Naive thymus-derived CD8-positive, alpha-beta T cell (primary cell): ENCODE measurements at regions of chr5 and their contacts with region 1.

Region 1: DNA sequence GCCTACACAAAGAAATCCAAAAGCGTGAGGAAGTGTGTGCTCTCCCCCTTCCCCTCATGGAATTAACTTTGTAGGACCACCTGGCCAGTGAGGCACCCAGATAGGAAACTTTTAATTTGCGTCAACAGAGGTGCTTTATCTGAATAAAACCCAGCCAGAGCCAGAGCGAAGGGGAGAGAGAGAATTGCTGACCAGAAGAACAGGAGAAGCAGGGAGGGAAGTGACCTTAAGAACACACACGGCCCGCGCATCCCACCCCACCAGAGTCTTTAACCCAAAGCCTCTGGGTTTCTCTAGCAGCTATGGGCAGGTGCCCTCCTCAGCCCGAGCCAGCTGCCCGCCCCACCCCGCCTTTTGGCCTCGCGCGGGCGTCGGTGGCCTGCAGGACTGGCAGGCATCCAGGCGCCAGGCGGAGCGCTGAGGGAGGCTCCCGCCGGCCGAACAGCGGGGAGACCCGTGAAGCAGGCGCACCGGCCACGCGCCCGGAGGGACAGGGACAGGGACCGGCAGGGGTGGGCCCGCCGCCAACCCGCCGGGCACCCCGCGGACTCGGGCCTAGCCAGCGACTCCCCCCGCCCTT is 580 bp downstream of the ERAP1 start:
- DNase-seq: peak in 5 of 10 donors; percentile 7 to 53 (median 44)
- ATAC-seq: peak; percentile 6 to 21
- H3K4me3 Mint-ChIP-seq: peak overlapping the region; percentile 93 to 99 (median 96)
- H3K27ac Mint-ChIP-seq: peak overlapping the region; percentile 98 to 100 (median 99)
- H3K4me1 Mint-ChIP-seq: peaks cover 43 to 87% (median 83%) of the 10 kb centered on the region in 4 donors
- H3K27me3 Mint-ChIP-seq: peaks cover 0 to 6% (median 0%) of the 10 kb centered on the region in 5 donors

Region 2: GRCh38 chr5:96662725-96663513 is 144.2 kb before region 1 on chr5:
- POLR2A ChIA-PET with region 1: interaction called, 21 read pairs
- DNase-seq: peak; percentile 73 to 88 (median 86)
- ATAC-seq: peak; percentile 72 to 76
- H3K4me3 Mint-ChIP-seq: peak overlapping the region; percentile 94 to 99 (median 96)
- H3K27ac Mint-ChIP-seq: peak overlapping the region; percentile 89 to 99 (median 96)
- H3K4me1 Mint-ChIP-seq: peaks cover 17 to 66% (median 35%) of the 10 kb centered on the region in 4 donors
- H3K27me3 Mint-ChIP-seq: no peaks in the 10 kb centered on the region

Region 3: DNA sequence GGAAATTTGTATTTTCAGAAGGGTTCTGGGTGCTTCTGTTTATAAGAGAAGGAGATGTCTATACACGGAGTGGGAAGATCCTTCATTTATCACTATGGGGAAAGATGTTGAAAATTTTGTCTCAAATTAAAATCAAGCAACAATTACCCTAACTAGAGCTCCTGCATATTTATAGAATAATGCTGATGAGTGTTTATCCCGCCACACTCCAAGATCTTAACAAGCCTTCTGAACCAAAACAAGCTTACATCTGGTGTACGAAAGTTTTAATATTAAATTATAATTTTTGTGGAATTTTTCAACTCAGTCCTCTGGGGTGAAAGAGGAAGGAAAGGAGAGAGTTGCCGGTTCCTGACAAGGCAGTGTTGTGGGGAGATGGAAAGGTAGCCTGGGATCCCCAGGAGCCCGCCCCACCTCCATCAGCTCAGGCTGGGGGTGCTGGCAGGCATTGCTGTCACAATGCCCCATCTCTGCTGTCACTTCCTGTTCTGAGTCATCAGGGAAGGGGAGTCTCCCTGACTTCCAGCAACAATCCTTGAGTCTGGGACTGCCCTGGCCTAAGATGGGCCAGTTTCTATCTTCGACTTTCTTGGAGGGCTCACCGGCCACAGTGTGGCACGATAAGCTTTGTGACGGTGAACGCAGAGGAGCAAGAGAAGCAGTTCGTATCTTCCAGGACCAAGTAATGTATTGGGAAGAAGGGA is 63.9 kb before region 1 on chr5:
- POLR2A ChIA-PET with region 1: no interaction called
- DNase-seq: no peak
- ATAC-seq: no peak
- H3K4me3 Mint-ChIP-seq: no peak overlapping the region
- H3K27ac Mint-ChIP-seq: peak overlapping the region in 6 of 10 donors; percentile 1 to 60 (median 38)
- H3K4me1 Mint-ChIP-seq: peaks cover 0 to 8% (median 0%) of the 10 kb centered on the region in 4 donors
- H3K27me3 Mint-ChIP-seq: no peaks in the 10 kb centered on the region

Region 4: DNA sequence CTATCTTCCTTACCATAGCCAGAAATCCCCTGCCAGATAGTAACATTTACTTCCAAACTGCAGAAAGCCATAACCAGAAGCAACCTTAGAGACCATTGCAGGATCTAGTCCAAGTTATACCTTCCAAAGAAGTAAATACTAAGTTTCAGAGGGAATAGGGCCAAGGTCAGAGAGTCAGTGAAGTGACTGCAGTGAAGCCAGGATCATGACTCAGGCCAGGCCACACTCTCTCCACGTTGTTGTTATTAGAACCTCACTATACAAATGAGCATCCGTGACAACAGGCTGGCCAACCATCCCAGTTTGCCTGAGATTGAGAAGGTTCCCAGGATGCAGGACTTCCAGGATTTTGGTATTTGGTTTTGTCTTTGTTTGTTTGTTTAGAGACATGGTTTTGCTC is 10.7 kb before region 1 on chr5:
- POLR2A ChIA-PET with region 1: interaction called, 19 read pairs
- DNase-seq: no peak
- ATAC-seq: no peak
- H3K4me3 Mint-ChIP-seq: peak overlapping the region in 3 of 10 donors; percentile 5 to 37 (median 30)
- H3K27ac Mint-ChIP-seq: peak overlapping the region in 9 of 10 donors; percentile 7 to 83 (median 48)
- H3K4me1 Mint-ChIP-seq: peaks cover 21 to 67% (median 52%) of the 10 kb centered on the region in 4 donors
- H3K27me3 Mint-ChIP-seq: no peaks in the 10 kb centered on the region

Region 5: DNA sequence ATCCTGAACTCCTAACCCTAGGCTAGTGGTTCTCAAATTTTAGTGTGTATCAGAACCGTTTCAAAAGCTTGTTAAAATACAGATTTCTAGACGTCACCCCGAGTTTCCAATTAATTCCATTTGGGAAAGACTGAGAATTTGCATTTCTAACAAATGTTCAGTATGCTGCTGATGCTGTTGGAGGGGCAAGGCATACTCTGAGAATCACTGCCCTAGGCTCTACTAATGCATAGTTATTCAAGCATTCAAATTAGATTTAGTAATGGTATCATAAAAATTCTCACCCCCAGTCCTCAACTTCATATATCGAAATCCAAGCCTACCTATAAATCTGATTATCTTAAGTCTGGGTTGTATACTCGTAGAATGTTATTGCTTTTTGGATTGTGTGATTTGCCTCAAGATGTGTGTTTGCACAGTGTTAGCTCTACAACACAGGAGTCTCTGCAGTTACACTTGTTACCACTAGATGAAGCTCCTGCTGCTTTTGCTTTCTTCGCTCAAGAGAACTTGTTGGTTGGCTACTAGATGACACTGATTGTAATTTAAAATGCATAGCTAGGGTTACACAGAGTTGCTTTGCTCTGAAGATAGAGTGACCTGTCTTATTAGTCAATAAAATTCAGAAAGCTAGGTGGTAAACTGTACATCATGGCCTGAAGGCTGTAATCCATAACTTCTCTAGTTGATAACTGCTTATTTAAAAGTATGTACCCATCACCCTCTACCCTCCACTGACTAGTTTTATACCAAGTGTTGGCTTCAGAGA is 61.6 kb after region 1 on chr5:
- POLR2A ChIA-PET with region 1: interaction called, 11 read pairs
- DNase-seq: peak in 6 of 10 donors; percentile 25 to 71 (median 52)
- ATAC-seq: peak; percentile 97 to 98
- H3K4me3 Mint-ChIP-seq: peak overlapping the region in 1 of 10 donors; percentile 11
- H3K27ac Mint-ChIP-seq: peak overlapping the region in 2 of 10 donors; percentile 20 to 84
- H3K4me1 Mint-ChIP-seq: peaks cover 16 to 47% (median 39%) of the 10 kb centered on the region in 4 donors
- H3K27me3 Mint-ChIP-seq: peaks cover 0 to 3% (median 0%) of the 10 kb centered on the region in 5 donors

Region 6: DNA sequence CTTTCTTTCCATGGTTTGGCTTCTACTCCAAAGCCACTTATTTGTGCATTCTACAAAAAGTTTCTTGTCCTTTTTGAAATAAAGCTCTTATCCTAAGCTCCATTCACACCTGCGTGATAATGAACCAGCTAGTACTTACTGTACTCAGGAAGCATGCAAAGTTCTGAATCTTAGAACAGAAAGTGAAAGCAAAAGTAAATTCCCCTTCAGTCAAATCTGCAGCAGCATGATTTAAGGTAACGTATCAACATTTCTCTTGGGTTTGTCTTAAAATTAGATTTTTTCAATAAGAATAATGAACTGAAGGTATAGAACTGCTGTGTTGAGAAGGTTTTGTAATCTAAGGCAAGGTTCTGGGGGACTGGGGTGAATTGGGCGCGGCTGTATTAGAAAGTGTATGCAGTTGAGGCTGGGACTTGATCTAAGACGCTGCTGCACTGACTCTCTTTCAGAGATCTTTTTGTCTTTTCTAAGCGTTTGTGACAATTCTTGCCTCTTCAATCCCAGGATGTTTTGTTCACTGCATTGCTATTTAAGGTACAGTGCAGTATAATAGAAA is 69.2 kb after region 1 on chr5 and contains the start of gene ERAP2:
- POLR2A ChIA-PET with region 1: interaction called, 18 read pairs
- DNase-seq: peak in 5 of 10 donors; percentile 7 to 72 (median 66)
- ATAC-seq: peak; percentile 77 to 82
- H3K4me3 Mint-ChIP-seq: peak within 1 kb of the TSS; percentile 77 to 99 (median 96)
- H3K27ac Mint-ChIP-seq: peak within 1 kb of the TSS; percentile 91 to 99 (median 97)
- H3K4me1 Mint-ChIP-seq: peaks cover 43 to 84% (median 63%) of the 10 kb centered on the region in 4 donors
- H3K27me3 Mint-ChIP-seq: no peaks in the 10 kb centered on the region
- polyA plus RNA-seq, gene ERAP2: 6.4 to 126 (median 6.6) TPM

Region 7: DNA sequence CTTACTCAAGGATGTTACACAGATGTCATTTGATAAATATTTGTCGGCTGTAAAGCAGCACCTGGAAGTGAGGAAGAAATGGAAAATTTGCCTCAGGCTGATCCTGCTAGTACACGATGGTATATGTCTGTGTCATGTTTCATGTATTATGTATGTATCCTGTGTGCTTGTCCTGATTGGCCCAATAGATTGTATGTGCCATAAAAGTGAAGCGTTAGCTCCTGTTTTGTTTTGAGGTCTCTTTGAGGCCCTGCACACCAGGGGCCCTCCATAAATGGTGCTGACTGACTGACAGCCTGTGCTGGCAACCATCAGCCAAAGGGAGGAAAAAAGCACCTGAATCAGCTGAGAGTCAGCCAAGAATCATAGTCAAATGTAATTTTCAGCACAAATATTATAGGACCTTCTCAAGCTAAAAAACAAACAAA is 116.9 kb after region 1 on chr5:
- POLR2A ChIA-PET with region 1: interaction called, 16 read pairs
- DNase-seq: peak in 8 of 10 donors; percentile 13 to 71 (median 50)
- ATAC-seq: peak; percentile 97
- H3K4me3 Mint-ChIP-seq: peak overlapping the region; percentile 9 to 74 (median 58)
- H3K27ac Mint-ChIP-seq: peak overlapping the region; percentile 84 to 98 (median 94)
- H3K4me1 Mint-ChIP-seq: peaks cover 18 to 77% (median 54%) of the 10 kb centered on the region in 4 donors
- H3K27me3 Mint-ChIP-seq: no peaks in the 10 kb centered on the region